Heart right ventricle (tissue), 16 donors: ENCODE measurements at regions of chr3 and their contacts with region 1.

Region 1: DNA sequence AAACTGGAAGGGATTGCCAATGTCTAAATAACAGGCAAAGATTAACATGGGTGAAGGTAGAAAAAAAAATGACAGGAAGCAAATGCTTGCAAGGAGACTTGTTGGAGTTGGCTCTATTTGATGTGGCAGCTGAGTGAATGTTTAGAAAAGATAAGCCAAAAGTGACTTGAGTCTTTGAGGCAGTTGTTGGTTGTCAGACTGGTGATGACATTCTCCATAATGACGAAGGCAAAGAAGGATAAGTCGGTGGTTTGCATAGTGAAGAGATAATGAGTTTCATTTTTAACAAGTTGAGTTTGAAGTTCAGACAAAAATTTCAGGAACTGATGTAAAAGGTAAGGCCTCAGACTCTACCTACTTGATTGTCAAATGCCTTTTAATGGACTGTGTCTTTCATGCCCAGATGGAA is 704.1 kb upstream of the SGO1 start:
- DNase-seq: no peak
- ATAC-seq: no peak
- H3K4me3 ChIP-seq: no peak overlapping the region
- H3K27ac ChIP-seq: no peak overlapping the region
- H3K4me1 ChIP-seq: no peaks in the 10 kb centered on the region
- H3K27me3 ChIP-seq: no peaks in the 10 kb centered on the region
- CTCF ChIP-seq: no peak

Region 2: DNA sequence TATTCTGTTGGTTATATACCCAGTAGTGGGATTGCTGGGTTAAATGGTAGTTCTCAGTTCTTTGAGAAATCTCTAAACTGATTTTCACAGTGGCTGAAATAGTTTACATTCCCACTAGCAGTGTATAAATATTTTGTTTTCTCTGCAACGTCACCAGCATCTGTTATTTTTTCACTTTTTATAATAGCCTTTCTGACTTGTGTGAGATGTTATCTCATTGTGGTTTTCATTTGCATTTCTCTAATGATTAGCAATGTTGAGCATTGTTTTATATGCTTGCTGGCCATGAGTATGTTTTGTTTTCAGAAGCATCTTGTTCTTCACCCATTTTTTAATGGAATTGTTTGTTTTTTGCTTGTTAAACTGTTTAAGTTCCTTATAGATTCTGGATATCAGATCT is 91.4 kb before region 1 on chr3:
- intact Hi-C with region 1: no loop called
- DNase-seq: no peak
- ATAC-seq: no peak
- H3K4me3 ChIP-seq: no peak overlapping the region
- H3K27ac ChIP-seq: no peak overlapping the region
- H3K4me1 ChIP-seq: no peaks in the 10 kb centered on the region
- H3K27me3 ChIP-seq: no peaks in the 10 kb centered on the region
- CTCF ChIP-seq: no peak

Region 3: DNA sequence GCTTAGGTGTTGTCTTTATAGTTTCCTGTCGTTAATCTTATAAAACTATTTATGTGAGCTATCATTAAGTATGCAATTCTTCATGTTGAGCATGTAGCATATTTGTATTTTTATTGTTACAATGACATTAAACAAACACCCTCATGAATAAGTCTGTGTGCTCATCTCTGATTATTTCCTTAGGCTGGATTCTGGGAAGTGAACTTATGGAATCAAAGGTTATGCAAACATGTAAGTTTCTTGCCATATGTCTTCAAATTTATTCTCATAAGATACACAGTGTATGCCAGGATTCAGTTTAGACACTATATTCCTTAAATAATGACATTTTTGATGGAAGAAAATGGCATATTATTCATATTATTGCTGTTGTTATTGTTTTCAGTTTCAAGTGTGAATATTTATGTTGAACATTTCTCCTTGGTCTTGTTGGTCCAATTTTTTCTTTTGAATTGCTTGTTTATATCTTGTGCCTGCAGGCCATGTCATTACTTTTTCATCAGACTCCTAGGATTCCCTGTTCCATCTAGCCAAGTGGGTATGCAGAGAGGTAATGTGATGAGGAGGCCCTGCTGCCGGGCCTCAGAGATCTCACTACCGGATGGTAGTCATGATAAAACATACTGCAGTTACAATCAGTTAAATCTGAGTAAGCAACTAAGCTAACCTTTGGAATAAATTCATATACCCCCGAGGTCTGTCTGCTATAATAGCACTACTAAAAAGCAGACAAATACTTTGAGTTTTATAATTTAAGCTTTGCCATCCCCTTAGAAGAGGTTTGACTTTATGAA is 19.8 kb before region 1 on chr3:
- intact Hi-C with region 1: no loop called
- DNase-seq: no peak
- ATAC-seq: no peak
- H3K4me3 ChIP-seq: no peak overlapping the region
- H3K27ac ChIP-seq: no peak overlapping the region
- H3K4me1 ChIP-seq: no peaks in the 10 kb centered on the region
- H3K27me3 ChIP-seq: no peaks in the 10 kb centered on the region
- CTCF ChIP-seq: no peak

Region 4: GRCh38 chr3:20958161-20958560 is 68.0 kb after region 1 on chr3:
- intact Hi-C with region 1: loop called in 1 of 10 experiments (anchors 10 kb)
- DNase-seq: no peak
- ATAC-seq: no peak
- H3K4me3 ChIP-seq: no peak overlapping the region
- H3K27ac ChIP-seq: no peak overlapping the region
- H3K4me1 ChIP-seq: no peaks in the 10 kb centered on the region
- H3K27me3 ChIP-seq: no peaks in the 10 kb centered on the region
- CTCF ChIP-seq: no peak